Activated naive CD8-positive, alpha-beta T cell treated with anti-CD3 and anti-CD28 coated beads, Interleukin-2, amount 10 ng/mL, durations not matched to agents 7 days and 5 days (primary cell): ENCODE measurements at regions of chr22 and their contacts with region 1.

Region 1: GRCh38 chr22:37623075-37624016 is 14.7 kb downstream of the GGA1 start:
- DNase-seq: peak; percentile 82
- ATAC-seq: peak; percentile 59
- H3K4me3 Mint-ChIP-seq: no peak overlapping the region
- H3K27ac Mint-ChIP-seq: peak overlapping the region; percentile 94
- H3K4me1 Mint-ChIP-seq: peaks cover 26% of the 10 kb centered on the region
- H3K27me3 Mint-ChIP-seq: no peaks in the 10 kb centered on the region

Region 2: GRCh38 chr22:37525073-37525748 is 98.1 kb before region 1 on chr22:
- POLR2A ChIA-PET with region 1: no interaction called
- DNase-seq: no peak
- ATAC-seq: no peak
- H3K4me3 Mint-ChIP-seq: no peak overlapping the region
- H3K27ac Mint-ChIP-seq: no peak overlapping the region
- H3K4me1 Mint-ChIP-seq: peaks cover 9% of the 10 kb centered on the region
- H3K27me3 Mint-ChIP-seq: peaks cover 35% of the 10 kb centered on the region

Region 3: GRCh38 chr22:37633625-37634416 is 10.5 kb after region 1 on chr22:
- POLR2A ChIA-PET with region 1: interaction called, 31 read pairs
- DNase-seq: peak; percentile 79
- ATAC-seq: peak; percentile 62
- H3K4me3 Mint-ChIP-seq: peak overlapping the region; percentile 82
- H3K27ac Mint-ChIP-seq: peak overlapping the region; percentile 99
- H3K4me1 Mint-ChIP-seq: peaks cover 67% of the 10 kb centered on the region
- H3K27me3 Mint-ChIP-seq: no peaks in the 10 kb centered on the region

Region 4: GRCh38 chr22:37643225-37643847 is 20.0 kb after region 1 on chr22:
- POLR2A ChIA-PET with region 1: interaction called, 31 read pairs
- DNase-seq: peak; percentile 92
- ATAC-seq: peak; percentile 58
- H3K4me3 Mint-ChIP-seq: peak overlapping the region; percentile 66
- H3K27ac Mint-ChIP-seq: peak overlapping the region; percentile 79
- H3K4me1 Mint-ChIP-seq: peaks cover 27% of the 10 kb centered on the region
- H3K27me3 Mint-ChIP-seq: no peaks in the 10 kb centered on the region

Region 5: DNA sequence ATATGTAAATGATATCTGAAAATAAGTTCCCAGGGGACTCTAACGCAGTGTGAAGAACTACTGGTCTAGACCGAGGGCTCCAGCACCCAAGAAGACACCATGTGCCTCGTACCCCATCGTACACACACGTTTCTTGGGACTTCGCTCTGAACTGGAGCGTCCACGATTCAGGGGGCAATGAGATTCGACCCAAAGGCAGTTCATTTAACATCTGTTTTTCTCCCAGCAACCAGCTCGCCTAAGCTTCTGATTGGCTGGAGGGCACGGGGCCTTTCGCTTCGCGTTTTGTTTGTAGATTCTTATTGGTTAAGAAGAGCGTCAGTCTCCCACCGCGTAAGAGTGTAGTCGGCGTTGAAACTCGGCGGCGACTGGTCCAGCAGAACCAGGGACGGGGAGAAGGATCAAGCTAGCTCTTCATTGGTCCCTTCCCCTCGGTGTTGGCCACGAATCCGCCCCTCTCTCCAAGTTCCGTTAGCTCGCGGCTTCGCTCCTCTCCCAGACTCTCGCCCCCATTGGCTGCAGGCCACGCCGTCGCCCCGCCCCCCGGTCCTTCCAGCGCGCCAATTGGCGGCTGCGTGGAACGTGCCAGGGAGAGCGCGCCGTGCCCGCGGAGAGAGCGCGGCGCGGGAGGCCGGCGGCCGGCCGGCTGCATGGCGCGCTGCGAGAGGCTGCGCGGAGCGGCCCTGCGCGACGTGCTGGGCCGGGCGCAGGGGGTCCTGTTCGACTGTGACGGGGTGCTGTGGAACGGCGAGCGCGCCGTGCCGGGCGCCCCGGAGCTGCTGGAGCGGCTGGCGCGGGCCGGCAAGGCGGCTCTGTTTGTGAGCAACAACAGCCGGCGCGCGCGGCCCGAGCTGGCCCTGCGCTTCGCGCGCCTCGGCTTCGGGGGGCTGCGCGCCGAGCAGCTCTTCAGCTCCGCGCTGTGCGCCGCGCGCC is 35.1 kb after region 1 on chr22 and contains the start of gene PDXP:
- POLR2A ChIA-PET with region 1: interaction called, 16 read pairs
- DNase-seq: peak; percentile 99
- ATAC-seq: peak; percentile 98
- H3K4me3 Mint-ChIP-seq: peak within 1 kb of the TSS; percentile 95
- H3K27ac Mint-ChIP-seq: peak within 1 kb of the TSS; percentile 95
- H3K4me1 Mint-ChIP-seq: peaks cover 35% of the 10 kb centered on the region
- H3K27me3 Mint-ChIP-seq: no peaks in the 10 kb centered on the region
- total RNA-seq, gene PDXP: 16.4 to 16.6 TPM

Region 6: DNA sequence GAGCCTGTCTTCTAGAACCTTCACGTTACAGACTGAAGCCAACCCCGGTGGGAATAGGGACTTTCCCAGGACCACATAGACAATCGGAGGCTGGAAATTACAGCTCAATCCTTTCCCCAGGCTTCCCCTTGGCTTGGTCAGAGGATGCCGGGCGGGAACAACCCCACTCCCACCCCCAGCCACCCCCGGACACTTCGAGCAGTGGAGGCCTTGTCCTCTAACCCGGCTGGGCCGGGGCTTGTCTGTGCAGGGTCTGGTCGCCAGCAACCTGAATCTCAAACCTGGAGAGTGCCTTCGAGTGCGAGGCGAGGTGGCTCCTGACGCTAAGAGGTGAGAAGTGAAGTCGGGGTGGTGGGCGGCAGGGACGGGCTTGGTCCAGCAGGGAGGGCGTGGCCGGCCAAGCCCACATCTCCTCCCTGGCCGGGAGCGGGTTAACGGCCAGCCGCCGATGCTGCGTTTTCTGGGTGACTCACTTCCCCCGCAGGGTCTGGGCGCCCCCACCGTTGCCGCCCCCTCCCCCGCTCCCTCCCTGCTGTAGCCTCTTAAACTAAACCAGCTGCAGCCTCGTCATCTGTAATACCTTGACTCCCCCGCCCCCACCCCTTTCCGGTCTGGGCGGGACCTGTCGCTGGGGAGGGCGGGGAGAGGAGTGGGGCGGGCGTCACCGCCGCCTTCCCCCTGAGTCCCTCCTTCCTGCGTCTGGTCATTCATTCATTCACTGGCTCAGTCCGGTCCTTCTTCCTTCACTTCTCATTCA is 53.6 kb after region 1 on chr22:
- POLR2A ChIA-PET with region 1: interaction called, 10 read pairs
- DNase-seq: peak; percentile 90
- ATAC-seq: peak; percentile 65
- H3K4me3 Mint-ChIP-seq: peak overlapping the region; percentile 92
- H3K27ac Mint-ChIP-seq: peak overlapping the region; percentile 99
- H3K4me1 Mint-ChIP-seq: peaks cover 36% of the 10 kb centered on the region
- H3K27me3 Mint-ChIP-seq: no peaks in the 10 kb centered on the region

Region 7: DNA sequence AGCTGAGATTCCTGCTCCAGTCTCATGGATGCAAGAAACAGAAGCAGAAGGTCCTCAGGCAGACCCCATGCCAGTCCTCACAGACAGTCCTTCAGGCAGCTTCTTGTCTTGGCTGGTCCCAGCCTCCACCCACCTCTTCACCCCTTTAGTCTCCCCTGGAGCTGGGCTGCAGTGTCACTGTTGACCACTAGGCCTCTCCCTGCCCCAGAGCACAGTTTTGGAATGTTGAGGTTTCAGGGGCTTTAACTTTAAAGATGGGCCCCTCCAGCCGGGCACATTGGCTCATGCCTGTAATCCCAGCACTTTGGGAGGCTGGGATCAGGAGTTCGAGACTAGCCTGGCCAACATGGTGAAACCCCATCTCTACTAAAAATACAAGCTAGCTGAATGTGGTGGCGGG is 144.9 kb after region 1 on chr22:
- POLR2A ChIA-PET with region 1: no interaction called
- DNase-seq: no peak
- ATAC-seq: no peak
- H3K4me3 Mint-ChIP-seq: no peak overlapping the region
- H3K27ac Mint-ChIP-seq: peak overlapping the region; percentile 21
- H3K4me1 Mint-ChIP-seq: no peaks in the 10 kb centered on the region
- H3K27me3 Mint-ChIP-seq: no peaks in the 10 kb centered on the region